ENCODE measurements at regions of chr3 and their contacts with region 1.

Region 1: DNA sequence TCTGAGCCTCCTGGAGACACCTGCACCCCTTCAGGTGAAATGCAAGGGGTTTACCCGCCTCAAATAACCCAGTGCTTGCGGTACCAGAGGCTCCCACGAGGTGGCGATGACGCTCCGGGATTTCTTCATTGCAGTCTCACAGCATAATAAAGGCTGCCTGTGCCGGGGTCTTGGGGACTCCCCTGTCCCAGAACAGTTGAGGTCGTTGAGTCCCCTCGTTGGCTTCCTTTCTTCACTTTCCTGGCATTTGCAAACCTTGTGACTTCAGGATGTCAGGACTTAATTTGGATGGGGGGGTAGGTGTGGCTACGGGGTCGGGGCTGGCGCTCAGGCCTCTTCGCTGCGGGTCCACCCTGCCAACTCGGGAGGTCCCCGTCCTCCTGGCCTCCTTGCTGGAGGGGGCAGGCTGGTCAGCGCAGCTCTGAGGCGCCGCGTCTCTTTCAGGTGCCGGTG is 1.3 kb downstream of the GNAT1 start:
- DNase-seq: peak; percentile 46
- H3K4me3 ChIP-seq: no peak overlapping the region
- H3K27ac ChIP-seq: no peak overlapping the region
- H3K4me1 ChIP-seq: peaks cover 7% of the 10 kb centered on the region
- H3K27me3 ChIP-seq: peaks cover 2% of the 10 kb centered on the region
- CTCF ChIP-seq: peak; percentile 90 to 91

Region 2: GRCh38 chr3:50121416-50122032 is 71.2 kb before region 1 on chr3:
- CTCF ChIA-PET with region 1: interaction called, 17 read pairs
- dilution Hi-C with region 1: no loop called
- in situ Hi-C with region 1: loop called (anchors 5 to 10 kb)
- intact Hi-C with region 1: loop called (anchors 1 kb)
- DNase-seq: peak; percentile 60
- H3K4me3 ChIP-seq: no peak overlapping the region
- H3K27ac ChIP-seq: no peak overlapping the region
- H3K4me1 ChIP-seq: peaks cover 13% of the 10 kb centered on the region
- H3K27me3 ChIP-seq: no peaks in the 10 kb centered on the region
- CTCF ChIP-seq: peak; percentile 74 to 84

Region 3: DNA sequence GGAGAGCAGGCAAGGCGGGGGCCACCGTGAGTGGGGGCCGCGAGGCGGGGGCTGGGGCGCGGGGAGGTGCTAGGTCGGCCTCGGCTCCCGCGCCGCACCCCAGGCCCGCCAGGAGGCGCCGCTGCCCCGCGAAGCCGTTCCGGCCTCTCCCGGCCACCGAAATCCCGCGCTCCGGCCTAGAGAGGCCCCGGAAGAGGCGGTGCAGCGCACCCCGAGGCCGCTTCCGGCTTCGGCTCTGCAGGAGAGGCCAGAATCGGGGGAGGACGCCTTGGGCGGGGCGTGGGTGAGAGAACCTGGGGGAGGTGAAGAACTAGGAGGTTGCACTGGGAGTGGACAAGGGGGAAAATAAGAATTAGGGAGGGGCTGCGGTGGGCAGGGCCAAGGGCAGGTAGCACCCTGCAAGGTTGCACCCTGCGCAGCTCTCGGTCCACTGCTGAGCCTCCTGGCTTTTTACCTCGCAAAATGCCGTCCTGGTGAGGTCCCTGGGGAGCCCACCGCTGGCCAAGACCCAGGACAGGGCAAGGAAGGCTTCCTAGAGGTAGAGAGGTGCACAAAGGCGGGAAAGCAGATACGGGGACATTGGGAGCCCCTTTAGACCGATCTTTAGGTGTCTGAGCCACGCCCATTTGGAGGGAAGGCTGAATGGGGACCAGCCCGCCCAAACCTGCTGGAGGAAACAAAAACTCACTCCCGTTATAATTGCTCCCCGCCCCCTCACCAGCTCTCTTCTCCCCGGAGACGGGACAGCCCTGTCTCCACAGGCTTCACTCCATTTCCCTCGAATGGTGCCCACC is 34.9 kb after region 1 on chr3:
- CTCF ChIA-PET with region 1: interaction called, 3 read pairs
- dilution Hi-C with region 1: no loop called
- in situ Hi-C with region 1: no loop called
- intact Hi-C with region 1: loop called (anchors 1 kb)
- DNase-seq: peak; percentile 96
- H3K4me3 ChIP-seq: peak overlapping the region; percentile 58 to 60 (median 59)
- H3K27ac ChIP-seq: peak overlapping the region; percentile 52
- H3K4me1 ChIP-seq: peaks cover 20% of the 10 kb centered on the region
- H3K27me3 ChIP-seq: no peaks in the 10 kb centered on the region
- CTCF ChIP-seq: peak; percentile 43 to 74

Region 4: DNA sequence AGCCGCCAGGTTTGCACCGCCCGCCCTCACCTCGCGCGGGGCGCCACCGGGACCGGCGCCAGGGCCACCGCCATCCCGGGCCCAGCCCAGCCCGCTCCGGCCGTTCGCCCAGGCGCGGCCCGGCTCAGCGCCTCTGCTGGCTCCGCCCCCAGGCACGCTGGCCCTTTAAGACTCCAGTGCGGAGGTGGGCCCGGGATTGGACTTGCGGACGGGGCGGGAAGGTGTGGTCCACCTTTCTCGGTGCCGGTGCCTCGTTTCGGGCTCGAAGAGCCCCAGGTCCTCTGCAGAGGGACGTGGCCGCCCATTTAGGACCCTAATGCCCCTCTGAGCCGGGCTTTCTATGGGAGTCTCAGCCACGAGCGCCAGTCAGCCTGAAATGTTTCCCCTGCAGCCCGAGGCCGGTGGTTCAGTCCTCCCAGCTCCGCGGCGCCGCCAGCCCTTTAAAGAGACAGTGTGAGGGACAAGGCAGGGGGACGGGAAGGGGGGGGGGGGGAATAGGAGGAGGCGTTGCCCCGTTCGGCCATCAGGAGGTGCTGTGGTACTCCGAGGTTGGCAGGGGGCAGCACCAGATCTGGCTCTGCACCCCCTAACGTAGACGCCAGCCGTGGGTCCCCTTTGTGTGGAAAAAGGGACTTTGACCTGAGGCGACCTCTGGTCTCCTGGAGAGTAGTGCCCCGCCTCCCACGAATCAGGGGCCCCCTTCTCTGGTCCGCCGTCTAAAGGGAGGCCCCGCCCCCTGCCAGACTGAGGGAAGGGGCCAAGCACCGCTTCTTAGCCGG is 128.8 kb after region 1 on chr3:
- CTCF ChIA-PET with region 1: no interaction called
- dilution Hi-C with region 1: no loop called
- in situ Hi-C with region 1: no loop called
- intact Hi-C with region 1: loop called (anchors 1 kb)
- DNase-seq: peak; percentile 85
- H3K4me3 ChIP-seq: peak overlapping the region; percentile 43 to 72 (median 64)
- H3K27ac ChIP-seq: peak overlapping the region; percentile 98
- H3K4me1 ChIP-seq: peaks cover 46% of the 10 kb centered on the region
- H3K27me3 ChIP-seq: no peaks in the 10 kb centered on the region
- CTCF ChIP-seq: peak; percentile 1 to 48